Activated T-helper 2 cell treated with anti-CD3 and anti-CD28 coated beads, Interferon-gamma antibody, Interleukin-2, Interleukin-4, amounts not matched to agents 10 μg/mL and 5 μg/mL and 100 μg/mL, durations not matched to agents 14 hours and 24 hours and 36 hours (primary cell): ENCODE measurements at regions of chr13 and their contacts with region 1.

Region 1: DNA sequence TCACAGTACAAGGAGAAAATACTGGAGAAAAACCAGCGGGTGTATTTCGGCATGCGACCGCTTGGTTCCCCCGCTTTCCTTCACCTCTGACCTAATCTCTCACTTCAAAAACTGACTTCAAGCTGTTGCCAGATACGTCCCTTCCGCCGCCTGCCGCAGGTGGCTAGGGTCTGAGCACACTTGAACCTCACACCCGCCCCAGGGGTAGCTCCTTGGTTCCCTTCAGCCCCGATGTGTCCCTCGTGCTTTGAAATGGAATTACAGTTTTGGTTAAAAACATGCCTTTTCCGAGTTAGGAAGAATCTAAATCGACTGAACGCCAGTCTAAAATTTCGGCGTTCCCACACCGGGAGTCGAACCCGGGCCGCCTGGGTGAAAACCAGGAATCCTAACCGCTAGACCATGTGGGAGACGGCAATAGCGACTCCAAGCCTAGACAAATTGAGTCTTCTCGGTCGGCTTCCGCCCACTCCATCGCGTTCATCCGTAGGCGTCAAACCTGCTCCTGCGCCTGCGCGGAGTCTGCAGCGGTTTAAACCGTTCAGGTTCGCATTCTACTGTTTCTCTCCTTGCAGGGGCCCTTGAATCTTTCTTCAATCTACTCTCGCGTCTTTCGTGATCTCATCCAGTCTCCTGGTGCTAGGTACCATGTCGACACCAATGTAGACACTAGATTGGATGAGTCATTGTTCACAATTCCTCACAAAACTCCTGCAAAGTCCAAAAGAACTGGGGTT is 71.5 kb downstream of the NUFIP1 start:
- DNase-seq: peak; percentile 94
- H3K4me3 Mint-ChIP-seq: no peak overlapping the region
- H3K27ac Mint-ChIP-seq: no peak overlapping the region
- H3K4me1 Mint-ChIP-seq: no peaks in the 10 kb centered on the region
- H3K27me3 Mint-ChIP-seq: no peaks in the 10 kb centered on the region

Region 2: DNA sequence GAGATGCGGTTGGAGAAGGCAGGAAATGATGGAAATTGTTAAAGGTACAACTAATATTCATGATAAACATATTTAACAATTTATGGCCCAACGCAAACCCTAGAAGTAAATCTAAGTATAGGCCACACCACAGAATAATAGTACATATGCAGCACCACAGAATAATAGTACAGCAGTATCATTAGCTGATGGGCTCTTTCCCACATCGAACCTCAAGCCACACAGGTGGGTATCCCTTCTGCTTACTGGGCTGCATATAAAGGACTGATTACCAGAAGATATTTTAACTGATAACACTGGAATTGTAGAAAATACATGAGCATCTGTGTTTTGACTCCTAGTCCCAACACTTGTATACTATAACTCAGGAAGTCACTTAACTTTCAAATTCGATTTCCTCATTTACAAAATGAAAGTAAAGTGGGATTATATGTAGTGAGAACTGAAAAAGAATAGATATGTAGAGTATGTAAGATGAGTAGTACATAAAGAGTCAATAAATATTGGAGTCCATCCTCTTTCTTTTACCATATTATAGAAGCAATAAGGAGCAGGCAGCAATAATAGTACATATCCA is 433.1 kb before region 1 on chr13:
- intact Hi-C with region 1: loop called (anchors 2 kb)
- DNase-seq: no peak
- H3K4me3 Mint-ChIP-seq: no peak overlapping the region
- H3K27ac Mint-ChIP-seq: no peak overlapping the region
- H3K4me1 Mint-ChIP-seq: peaks cover 11% of the 10 kb centered on the region
- H3K27me3 Mint-ChIP-seq: peaks cover 6% of the 10 kb centered on the region

Region 3: DNA sequence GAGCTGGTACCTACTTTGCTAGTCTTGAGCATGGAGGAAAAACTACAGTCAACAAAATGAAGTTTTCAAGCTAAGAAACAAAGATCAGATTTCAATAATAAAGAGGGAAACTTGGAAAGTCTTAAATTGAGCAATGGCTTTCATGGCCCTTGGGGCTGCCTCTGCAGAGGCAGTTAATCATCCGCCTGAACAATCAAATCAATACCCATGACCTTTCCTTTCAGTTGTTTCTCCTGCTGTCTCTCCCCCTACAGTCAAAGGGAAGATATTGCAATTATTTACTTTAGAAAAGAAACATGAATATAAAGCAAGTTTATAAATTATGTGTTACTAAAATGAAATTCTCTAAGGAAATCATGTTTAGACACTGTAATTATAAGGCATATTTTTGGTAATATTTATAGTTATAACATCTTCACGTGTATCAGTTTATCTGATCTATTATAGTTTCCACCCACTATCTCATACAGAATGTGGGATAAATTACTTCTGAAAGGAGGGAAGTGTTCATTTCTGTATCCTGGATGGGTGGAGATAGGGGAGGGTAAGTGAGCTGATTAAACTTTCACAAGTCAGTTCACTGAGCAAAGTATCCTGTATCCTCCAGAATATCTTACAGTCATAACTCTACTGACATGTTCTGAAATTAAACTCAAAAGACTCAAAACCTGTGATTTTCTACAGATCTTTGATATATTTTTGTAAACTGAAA is 269.2 kb before region 1 on chr13:
- intact Hi-C with region 1: loop called (anchors 1 kb)
- DNase-seq: no peak
- H3K4me3 Mint-ChIP-seq: no peak overlapping the region
- H3K27ac Mint-ChIP-seq: peak overlapping the region; percentile 25
- H3K4me1 Mint-ChIP-seq: peaks cover 21% of the 10 kb centered on the region
- H3K27me3 Mint-ChIP-seq: peaks cover 14% of the 10 kb centered on the region

Region 4: DNA sequence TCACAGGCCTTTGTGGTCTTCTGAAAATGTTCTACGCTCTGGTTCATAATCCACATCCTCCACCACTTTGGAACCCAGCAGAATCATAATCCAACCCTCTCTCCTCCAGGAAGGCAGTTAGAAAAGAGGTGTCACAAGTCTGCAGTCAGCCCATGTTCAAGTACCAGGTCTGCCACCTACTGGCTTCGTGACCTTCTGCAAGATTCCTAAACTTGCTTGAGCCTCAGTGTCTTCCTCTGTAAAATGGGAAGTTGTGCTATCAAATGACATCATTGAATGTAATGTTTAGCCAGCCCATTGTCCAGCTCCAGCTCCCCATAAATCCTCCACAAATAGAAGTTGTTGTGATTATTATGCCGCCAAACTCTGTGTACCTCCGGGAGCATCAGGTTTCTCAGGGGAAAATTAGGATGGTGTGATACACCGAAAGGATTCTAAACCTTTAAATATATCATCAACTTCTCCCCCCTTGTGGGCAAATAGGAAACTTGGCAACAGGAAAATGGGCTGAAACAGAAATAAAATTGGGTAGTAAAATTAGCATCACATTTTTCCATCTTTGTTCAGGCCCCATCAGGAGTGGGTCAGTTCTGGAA is 38.2 kb before region 1 on chr13:
- intact Hi-C with region 1: no loop called
- DNase-seq: no peak
- H3K4me3 Mint-ChIP-seq: no peak overlapping the region
- H3K27ac Mint-ChIP-seq: no peak overlapping the region
- H3K4me1 Mint-ChIP-seq: peaks cover 2% of the 10 kb centered on the region
- H3K27me3 Mint-ChIP-seq: peaks cover 4% of the 10 kb centered on the region

Region 5: DNA sequence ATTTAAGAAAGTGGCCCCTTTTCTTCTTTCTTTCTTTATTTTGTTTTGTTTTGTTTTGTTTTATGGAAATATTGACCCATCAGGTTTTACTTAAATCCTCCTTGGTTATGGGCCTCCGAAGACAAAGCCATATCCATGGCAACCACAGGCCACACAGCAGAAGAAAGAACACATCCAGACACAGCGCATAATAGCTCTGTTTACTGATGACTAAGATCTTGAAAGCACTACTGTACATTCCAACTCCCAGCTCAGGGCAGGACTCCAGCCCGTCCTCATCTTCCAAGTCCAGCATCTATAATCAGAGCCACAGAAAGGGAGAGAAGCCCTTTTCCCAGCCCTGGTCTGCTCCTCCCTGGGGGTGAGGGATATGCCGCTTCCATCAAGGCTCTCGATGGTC is 12.8 kb before region 1 on chr13:
- intact Hi-C with region 1: no loop called
- DNase-seq: no peak
- H3K4me3 Mint-ChIP-seq: no peak overlapping the region
- H3K27ac Mint-ChIP-seq: no peak overlapping the region
- H3K4me1 Mint-ChIP-seq: no peaks in the 10 kb centered on the region
- H3K27me3 Mint-ChIP-seq: peaks cover 13% of the 10 kb centered on the region

Region 6: DNA sequence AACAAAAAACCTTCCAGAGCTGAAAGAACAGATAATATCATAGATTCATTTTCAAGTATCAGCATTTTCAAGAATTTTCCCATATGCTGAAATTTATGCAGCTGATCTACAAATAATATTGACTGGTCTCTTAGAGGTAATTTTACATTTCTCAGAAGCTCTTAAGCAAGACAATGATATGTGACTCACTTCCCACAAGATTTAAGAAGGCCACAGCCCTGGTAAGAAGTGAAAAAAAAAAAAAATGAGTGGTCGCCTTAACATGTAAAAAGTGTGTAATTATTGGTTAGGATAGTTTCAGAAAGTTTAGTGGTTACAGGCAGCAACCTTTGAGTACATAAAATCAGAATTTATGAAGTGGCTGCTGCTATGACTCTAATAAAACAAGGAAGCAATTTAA is 17.0 kb after region 1 on chr13:
- intact Hi-C with region 1: loop called (anchors 1 kb)
- DNase-seq: no peak
- H3K4me3 Mint-ChIP-seq: no peak overlapping the region
- H3K27ac Mint-ChIP-seq: no peak overlapping the region
- H3K4me1 Mint-ChIP-seq: peaks cover 10% of the 10 kb centered on the region
- H3K27me3 Mint-ChIP-seq: peaks cover 8% of the 10 kb centered on the region

Region 7: DNA sequence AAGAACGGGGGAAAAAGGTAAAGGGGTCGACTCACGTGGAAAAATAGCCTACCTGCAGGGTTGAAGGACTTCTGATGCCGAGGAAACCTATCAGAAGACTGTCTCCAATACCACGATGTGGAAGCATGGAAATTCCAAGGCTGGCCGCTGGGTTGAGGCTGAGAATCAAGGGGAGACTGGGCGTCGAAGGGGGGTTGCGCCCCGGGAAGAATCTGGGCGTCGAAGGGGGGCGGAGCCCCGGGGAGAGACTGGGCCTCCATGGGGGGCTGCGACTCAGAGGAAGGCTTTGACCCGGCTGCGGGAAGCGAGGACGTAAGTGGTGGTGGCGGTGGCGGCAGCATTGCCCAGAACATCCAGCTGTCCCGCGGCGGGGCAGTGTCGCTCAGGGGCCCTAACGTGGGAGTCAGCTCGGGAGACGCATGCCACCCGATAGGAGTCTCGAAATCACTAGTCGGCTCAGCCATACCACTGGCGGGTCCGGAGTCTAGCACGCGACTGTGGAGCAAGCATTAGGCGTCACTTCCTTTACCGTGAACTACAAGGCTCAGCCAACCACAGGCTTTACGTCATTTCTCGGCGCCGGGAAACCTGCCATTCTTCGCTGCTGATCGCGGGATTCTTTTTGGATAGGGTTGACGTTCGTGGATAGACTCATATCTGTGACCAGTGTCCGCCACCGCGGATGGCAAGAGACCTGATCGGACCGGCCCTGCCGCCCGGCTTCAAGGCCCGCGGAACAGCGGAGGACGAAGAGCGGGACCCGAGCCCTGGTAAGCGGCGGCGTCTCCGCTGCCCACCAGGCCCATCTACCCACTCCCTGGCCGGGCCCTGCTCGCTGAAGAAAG is 71.4 kb after region 1 on chr13 and contains the starts of genes GPALPP1 and NUFIP1:
- intact Hi-C with region 1: loop called (anchors 1 kb)
- DNase-seq: peak; percentile 88
- H3K4me3 Mint-ChIP-seq: peak within 1 kb of the TSS; percentile 95
- H3K27ac Mint-ChIP-seq: peak within 1 kb of the TSS; percentile 95
- H3K4me1 Mint-ChIP-seq: peaks cover 43% of the 10 kb centered on the region
- H3K27me3 Mint-ChIP-seq: no peaks in the 10 kb centered on the region
- total RNA-seq, gene GPALPP1: 29.1 and 32.9 TPM in 2 replicates
- total RNA-seq, gene NUFIP1: 9.5 and 10.3 TPM in 2 replicates

Region 8: GRCh38 chr13:45370922-45371406 is 453.2 kb after region 1 on chr13:
- intact Hi-C with region 1: no loop called
- DNase-seq: peak; percentile 22
- H3K4me3 Mint-ChIP-seq: no peak overlapping the region
- H3K27ac Mint-ChIP-seq: no peak overlapping the region
- H3K4me1 Mint-ChIP-seq: peaks cover 23% of the 10 kb centered on the region
- H3K27me3 Mint-ChIP-seq: no peaks in the 10 kb centered on the region

Region 9: GRCh38 chr13:45464687-45465453 is 547.1 kb after region 1 on chr13 and contains the start of gene COG3:
- intact Hi-C with region 1: loop called (anchors 10 kb)
- DNase-seq: peak; percentile 94
- H3K4me3 Mint-ChIP-seq: peak within 1 kb of the TSS; percentile 91
- H3K27ac Mint-ChIP-seq: peak within 1 kb of the TSS; percentile 83
- H3K4me1 Mint-ChIP-seq: peaks cover 28% of the 10 kb centered on the region
- H3K27me3 Mint-ChIP-seq: peaks cover 3% of the 10 kb centered on the region
- total RNA-seq, gene COG3: 21.3 and 22.5 TPM in 2 replicates